CD4-positive, alpha-beta T cell (primary cell): ENCODE measurements at regions of chrX and their contacts with region 1.

Region 1: DNA sequence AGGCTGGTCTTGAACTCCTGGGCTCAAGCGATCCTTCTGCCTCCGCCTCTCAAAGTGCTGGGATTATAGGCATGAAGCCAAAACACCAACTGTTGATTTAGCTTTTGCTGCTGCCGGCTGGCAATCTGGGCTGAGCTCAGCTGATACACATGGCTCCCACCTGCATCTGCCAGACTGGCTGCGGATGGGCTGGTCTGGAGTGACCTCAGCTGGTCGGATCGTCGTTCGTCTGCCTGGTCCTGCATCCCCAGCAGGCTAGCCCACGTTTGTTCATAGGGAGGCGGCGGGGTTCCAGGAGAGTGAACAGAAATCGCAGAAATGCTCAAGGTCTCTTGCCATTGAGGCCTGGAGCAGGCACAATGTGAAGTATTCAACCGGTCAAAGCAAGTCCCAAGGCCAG is 74.4 kb upstream of the DDX3X start:
- DNase-seq: no peak
- ATAC-seq: no peak
- H3K4me3 ChIP-seq: no peak overlapping the region
- H3K4me3 Mint-ChIP-seq: no peak overlapping the region
- H3K27ac ChIP-seq: no peak overlapping the region
- H3K27ac Mint-ChIP-seq: no peak overlapping the region
- H3K4me1 ChIP-seq: no peaks in the 10 kb centered on the region
- H3K4me1 Mint-ChIP-seq: no peaks in the 10 kb centered on the region
- H3K27me3 ChIP-seq: no peaks in the 10 kb centered on the region
- H3K27me3 Mint-ChIP-seq: peaks cover 4% of the 10 kb centered on the region
- CTCF ChIP-seq: no peak

Region 2: GRCh38 chrX:40877887-40878286 is 381.6 kb before region 1 on chrX:
- CTCF ChIA-PET with region 1: no interaction called
- POLR2A ChIA-PET with region 1: no interaction called
- intact Hi-C with region 1: loop called in 1 of 2 experiments (anchors 10 kb)
- DNase-seq: peak in 4 of 14 experiments; percentile 27 to 60 (median 52)
- ATAC-seq: no peak
- H3K4me3 ChIP-seq: no peak overlapping the region
- H3K4me3 Mint-ChIP-seq: no peak overlapping the region
- H3K27ac ChIP-seq: no peak overlapping the region
- H3K27ac Mint-ChIP-seq: no peak overlapping the region
- H3K4me1 ChIP-seq: no peaks in the 10 kb centered on the region
- H3K4me1 Mint-ChIP-seq: no peaks in the 10 kb centered on the region
- H3K27me3 ChIP-seq: no peaks in the 10 kb centered on the region
- H3K27me3 Mint-ChIP-seq: no peaks in the 10 kb centered on the region
- CTCF ChIP-seq: peak; percentile 55

Region 3: GRCh38 chrX:42093756-42094155 is 834.2 kb after region 1 on chrX:
- CTCF ChIA-PET with region 1: no interaction called
- POLR2A ChIA-PET with region 1: no interaction called
- intact Hi-C with region 1: no loop called
- DNase-seq: peak in 2 of 14 experiments; percentile 12 to 42
- ATAC-seq: no peak
- H3K4me3 ChIP-seq: no peak overlapping the region
- H3K4me3 Mint-ChIP-seq: no peak overlapping the region
- H3K27ac ChIP-seq: no peak overlapping the region
- H3K27ac Mint-ChIP-seq: no peak overlapping the region
- H3K4me1 ChIP-seq: peaks cover 3% of the 10 kb centered on the region
- H3K4me1 Mint-ChIP-seq: peaks cover 7% of the 10 kb centered on the region
- H3K27me3 ChIP-seq: no peaks in the 10 kb centered on the region
- H3K27me3 Mint-ChIP-seq: no peaks in the 10 kb centered on the region
- CTCF ChIP-seq: no peak